Spleen (tissue), 13 donors: ENCODE measurements at regions of chr1 and their contacts with region 1.

Region 1: DNA sequence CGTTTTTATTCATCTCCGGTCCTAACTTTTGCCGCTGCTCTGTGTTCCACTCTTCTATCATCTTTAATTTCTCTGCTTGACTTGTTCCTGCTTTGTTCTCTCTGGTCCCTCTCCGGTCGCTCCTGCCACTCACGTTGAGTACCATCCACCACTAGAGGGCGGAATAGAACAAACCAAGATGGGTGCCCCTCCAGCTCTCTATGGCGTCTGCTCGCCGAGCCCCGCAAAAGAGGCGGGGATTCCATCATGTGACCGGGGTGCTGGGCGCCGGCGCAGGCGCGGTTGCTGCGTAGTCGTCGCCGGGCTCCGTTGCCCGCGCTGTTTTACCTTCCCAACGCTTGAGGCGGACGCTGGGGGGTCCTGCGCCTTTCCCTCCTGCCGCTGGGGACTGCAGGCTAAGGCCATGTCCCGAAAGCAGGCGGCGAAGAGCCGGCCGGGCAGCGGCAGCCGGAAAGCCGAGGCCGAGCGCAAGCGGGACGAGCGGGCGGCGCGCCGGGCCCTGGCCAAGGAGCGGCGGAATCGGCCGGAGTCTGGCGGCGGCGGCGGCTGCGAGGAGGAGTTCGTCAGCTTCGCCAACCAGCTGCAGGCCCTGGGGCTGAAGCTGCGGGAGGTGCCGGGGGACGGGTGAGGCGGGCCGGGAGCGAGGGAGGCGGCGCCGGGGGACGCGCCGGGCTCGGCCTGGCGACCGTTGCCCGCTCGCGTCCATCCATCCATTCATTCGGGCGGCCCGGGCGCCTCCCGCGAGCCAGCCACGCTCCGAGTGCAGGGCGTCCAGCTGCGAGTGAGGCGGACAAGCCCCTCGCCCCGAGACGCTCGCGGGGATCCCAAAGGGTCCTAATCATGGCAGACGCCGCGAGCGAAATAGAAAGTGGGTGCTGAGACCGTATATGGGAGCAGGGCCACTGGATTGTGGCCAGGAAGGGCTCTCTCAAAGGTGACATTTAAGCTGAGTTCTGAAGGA is at the start of gene OTUD3:
- DNase-seq: peak; percentile 98
- H3K4me3 ChIP-seq: peak within 1 kb of the TSS; percentile 74 to 97 (median 90)
- H3K27ac ChIP-seq: peak within 1 kb of the TSS; percentile 89 to 94 (median 91)
- H3K4me1 ChIP-seq: peaks cover 12 to 39% (median 28%) of the 10 kb centered on the region in 6 donors
- H3K27me3 ChIP-seq: peaks cover 0 to 23% (median 0%) of the 10 kb centered on the region in 7 donors
- CTCF ChIP-seq: peak; percentile 92 to 98 (median 96)
- POLR2A ChIP-seq: peak in 1 of 3 donors; percentile 60
- total RNA-seq, gene OTUD3: 5.1 to 14.0 (median 8.4) TPM

Region 2: DNA sequence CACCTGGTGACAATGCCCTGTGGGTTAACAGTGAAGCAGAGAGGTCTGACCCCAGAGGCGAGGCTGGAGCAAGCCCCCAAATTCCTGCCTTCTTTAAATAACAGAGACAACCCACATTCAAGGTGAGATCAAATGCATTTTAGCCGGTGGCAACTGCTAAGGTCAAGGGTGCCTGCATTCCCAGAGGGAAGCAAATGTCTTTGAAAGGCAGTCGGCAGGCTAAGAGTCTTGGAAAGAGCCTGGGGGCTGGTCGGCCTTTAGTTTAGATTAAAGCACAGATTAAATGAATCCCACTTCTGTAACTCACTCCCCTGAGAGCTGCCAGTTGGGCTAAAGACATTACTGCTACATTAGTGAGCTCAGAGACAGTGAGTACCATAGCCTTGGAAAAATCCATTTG is 158.6 kb before region 1 on chr1:
- intact Hi-C with region 1: no loop called
- DNase-seq: no peak
- H3K4me3 ChIP-seq: no peak overlapping the region
- H3K27ac ChIP-seq: no peak overlapping the region
- H3K4me1 ChIP-seq: no peaks in the 10 kb centered on the region
- H3K27me3 ChIP-seq: no peaks in the 10 kb centered on the region
- CTCF ChIP-seq: no peak
- POLR2A ChIP-seq: no peak

Region 3: DNA sequence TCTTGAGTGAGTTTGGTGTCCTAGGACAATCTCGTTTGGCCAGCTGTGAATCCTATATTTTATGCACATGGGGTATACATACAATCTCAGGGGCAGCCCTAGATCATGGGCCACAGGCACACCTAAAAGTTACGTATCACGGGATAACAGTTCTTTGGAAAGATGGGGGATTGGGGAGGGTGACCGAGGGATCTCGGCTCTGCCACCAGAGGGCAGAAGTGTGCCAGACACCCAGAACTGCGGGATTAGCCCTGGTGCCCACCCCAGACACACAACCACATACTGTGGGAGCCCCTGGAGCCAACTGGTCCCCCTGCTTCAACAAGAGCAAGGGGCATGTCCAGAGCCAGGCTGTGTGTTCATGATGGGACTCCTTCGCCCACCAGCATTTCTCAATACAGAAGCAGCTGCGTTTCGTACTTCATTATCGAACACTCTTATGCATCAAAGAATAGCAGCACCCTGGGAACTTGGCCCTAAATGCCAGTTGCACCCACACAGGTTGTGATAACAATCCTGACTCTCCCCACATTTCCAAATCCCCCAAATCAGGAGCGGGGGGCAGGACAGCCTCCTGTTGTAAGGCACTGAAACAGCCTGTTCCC is 120.1 kb before region 1 on chr1:
- intact Hi-C with region 1: loop called (anchors 5 kb)
- DNase-seq: no peak
- H3K4me3 ChIP-seq: no peak overlapping the region
- H3K27ac ChIP-seq: no peak overlapping the region
- H3K4me1 ChIP-seq: peaks cover 0 to 12% (median 0%) of the 10 kb centered on the region in 6 donors
- H3K27me3 ChIP-seq: no peaks in the 10 kb centered on the region
- CTCF ChIP-seq: peak in 8 of 11 experiments; percentile 20 to 76 (median 66)
- POLR2A ChIP-seq: no peak

Region 4: GRCh38 chr1:19786988-19787423 is 95.4 kb before region 1 on chr1:
- intact Hi-C with region 1: no loop called
- DNase-seq: no peak
- H3K4me3 ChIP-seq: no peak overlapping the region
- H3K27ac ChIP-seq: no peak overlapping the region
- H3K4me1 ChIP-seq: peaks cover 0 to 10% (median 0%) of the 10 kb centered on the region in 6 donors
- H3K27me3 ChIP-seq: no peaks in the 10 kb centered on the region
- CTCF ChIP-seq: no peak
- POLR2A ChIP-seq: no peak